Cardiac septum (tissue), 1 donor: ENCODE measurements at regions of chr22 and their contacts with region 1.

Region 1: GRCh38 chr22:50656122-50657070 is 16.2 kb upstream of the SHANK3 start:
- DNase-seq: peak; percentile 73

Region 2: GRCh38 chr22:50640857-50641647 is 15.3 kb before region 1 on chr22:
- intact Hi-C with region 1: no loop called
- DNase-seq: no peak

Region 3: GRCh38 chr22:50672471-50673230 is 16.3 kb after region 1 on chr22 and contains the start of gene SHANK3:
- intact Hi-C with region 1: loop called (anchors 1 kb)
- DNase-seq: peak; percentile 87
- total RNA-seq, gene SHANK3: 25.9 TPM

Region 4: GRCh38 chr22:50717709-50718351 is 61.4 kb after region 1 on chr22:
- intact Hi-C with region 1: no loop called
- DNase-seq: no peak